ENCODE measurements at regions of chr19 and their contacts with region 1.

Region 1: GRCh38 chr19:44845612-44846454 is at the start of gene NECTIN2:
- DNase-seq: peak; percentile 98
- ATAC-seq: peak; percentile 77
- H3K4me3 ChIP-seq: peak within 1 kb of the TSS; percentile 97
- H3K27ac ChIP-seq: peak within 1 kb of the TSS; percentile 97
- H3K4me1 ChIP-seq: peaks cover 12% of the 10 kb centered on the region
- H3K27me3 ChIP-seq: no peaks in the 10 kb centered on the region
- CTCF ChIP-seq: peak; percentile 79
- POLR2A ChIP-seq: peak; percentile 94
- RAD21 ChIP-seq: peak; percentile 56
- total RNA-seq, gene NECTIN2: 77.8 and 78.0 TPM in 2 replicates

Region 2: DNA sequence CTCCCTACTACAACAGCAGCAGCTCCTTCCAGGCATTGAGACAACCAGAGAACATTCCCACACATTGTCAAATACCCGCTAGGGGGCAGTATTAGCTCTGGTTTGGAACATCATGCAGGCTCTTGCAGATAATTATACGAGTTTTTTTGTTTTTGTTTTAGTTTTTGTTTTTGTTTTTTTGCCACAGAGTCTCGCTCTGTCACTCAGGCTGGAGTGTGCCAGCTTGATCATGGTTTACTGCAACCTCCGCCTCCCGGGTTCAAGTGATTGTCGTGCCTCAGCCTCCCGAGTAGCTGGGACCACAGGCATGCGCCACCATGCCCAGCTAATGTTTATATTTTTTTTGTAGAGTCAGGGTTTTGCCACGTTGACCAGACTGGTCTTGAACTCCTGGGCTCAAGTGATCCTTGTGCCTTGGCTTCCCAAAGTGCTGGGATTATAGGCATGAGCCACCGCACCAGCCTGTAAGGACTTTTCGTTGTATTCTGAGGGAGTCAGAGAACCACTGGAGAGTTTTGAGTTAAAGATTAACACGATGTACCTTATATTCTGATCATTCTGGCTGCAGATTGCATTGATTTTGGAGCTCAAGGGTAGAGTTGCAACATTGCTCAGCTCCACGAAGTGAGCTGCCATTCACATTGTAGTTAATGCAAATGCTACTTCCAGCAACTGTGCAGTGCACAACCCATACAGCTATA is 274.7 kb before region 1 on chr19:
- CTCF ChIA-PET with region 1: no interaction called
- POLR2A ChIA-PET with region 1: no interaction called
- dilution Hi-C with region 1: no loop called
- in situ Hi-C with region 1: loop called (anchors 5 kb)
- intact Hi-C with region 1: loop called (anchors 5 kb)
- DNase-seq: peak; percentile 82
- ATAC-seq: peak; percentile 88
- H3K4me3 ChIP-seq: no peak overlapping the region
- H3K27ac ChIP-seq: no peak overlapping the region
- H3K4me1 ChIP-seq: peaks cover 3% of the 10 kb centered on the region; the same call in 1 of the 2 replicates
- H3K27me3 ChIP-seq: peaks cover 8% of the 10 kb centered on the region
- CTCF ChIP-seq: peak; percentile 85
- POLR2A ChIP-seq: no peak
- RAD21 ChIP-seq: peak; percentile 84

Region 3: DNA sequence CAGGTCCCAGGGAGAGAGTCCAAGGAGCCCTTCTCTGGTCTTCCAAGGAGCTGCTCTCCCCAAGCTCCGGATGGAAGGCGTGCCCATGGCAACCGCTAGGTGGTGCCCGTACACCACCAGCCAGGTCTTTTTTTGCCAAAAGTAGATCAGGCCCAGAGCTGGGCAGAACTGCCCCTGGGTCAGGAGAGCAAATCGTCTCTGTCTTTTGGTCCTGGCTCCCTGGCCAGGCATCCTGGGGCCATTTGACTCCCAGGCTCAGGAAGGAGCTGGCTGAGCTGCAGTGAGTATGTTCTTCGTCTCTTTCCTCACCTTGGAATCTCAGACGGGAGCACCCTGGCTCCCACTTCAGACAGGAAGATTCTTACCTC is 121.9 kb before region 1 on chr19:
- CTCF ChIA-PET with region 1: interaction called, 6 read pairs
- POLR2A ChIA-PET with region 1: no interaction called
- dilution Hi-C with region 1: no loop called
- in situ Hi-C with region 1: loop called (anchors 5 kb)
- intact Hi-C with region 1: loop called (anchors 1 kb)
- DNase-seq: peak; percentile 73
- ATAC-seq: peak; percentile 96
- H3K4me3 ChIP-seq: no peak overlapping the region
- H3K27ac ChIP-seq: 0 out of 2 replicates have a peak overlapping the region, but pooled peaks have one; percentile 10
- H3K4me1 ChIP-seq: peaks cover 15% of the 10 kb centered on the region
- H3K27me3 ChIP-seq: no peaks in the 10 kb centered on the region
- CTCF ChIP-seq: peak; percentile 97
- POLR2A ChIP-seq: no peak
- RAD21 ChIP-seq: peak; percentile 98

Region 4: DNA sequence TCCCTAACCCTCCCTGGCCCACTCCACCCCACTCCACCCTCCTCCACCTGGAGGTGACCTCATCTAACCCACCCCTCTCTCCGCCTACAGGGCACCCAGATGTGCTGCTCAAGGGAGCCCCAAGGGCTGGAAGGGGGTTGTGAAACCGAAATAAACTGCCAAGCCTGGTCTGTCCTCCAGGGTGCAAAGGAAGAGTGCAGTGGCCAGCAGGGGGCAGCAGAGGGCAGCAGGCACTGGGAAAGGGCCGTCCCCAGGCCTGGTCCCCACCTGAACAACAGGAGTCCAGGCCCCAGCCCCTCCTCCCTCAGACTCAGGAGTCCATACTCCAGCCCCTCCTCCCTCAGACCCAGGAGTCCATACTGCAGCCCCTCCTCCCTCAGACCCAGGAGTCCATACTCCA is 45.4 kb before region 1 on chr19:
- CTCF ChIA-PET with region 1: interaction called, 3 read pairs
- POLR2A ChIA-PET with region 1: no interaction called
- dilution Hi-C with region 1: no loop called
- in situ Hi-C with region 1: no loop called
- intact Hi-C with region 1: loop called (anchors 1 kb)
- DNase-seq: peak; percentile 61
- ATAC-seq: peak; percentile 99
- H3K4me3 ChIP-seq: no peak overlapping the region
- H3K27ac ChIP-seq: no peak overlapping the region
- H3K4me1 ChIP-seq: peaks cover 4% of the 10 kb centered on the region
- H3K27me3 ChIP-seq: peaks cover 5% of the 10 kb centered on the region; the same call in 1 of the 2 replicates
- CTCF ChIP-seq: peak; percentile 96
- POLR2A ChIP-seq: no peak
- RAD21 ChIP-seq: peak; percentile 75

Region 5: GRCh38 chr19:44890366-44891015 is 44.7 kb after region 1 on chr19:
- CTCF ChIA-PET with region 1: no interaction called
- POLR2A ChIA-PET with region 1: no interaction called
- dilution Hi-C with region 1: no loop called
- in situ Hi-C with region 1: no loop called
- intact Hi-C with region 1: loop called (anchors 2 kb)
- DNase-seq: peak; percentile 100
- ATAC-seq: peak; percentile 89
- H3K4me3 ChIP-seq: peak overlapping the region; percentile 49
- H3K27ac ChIP-seq: peak overlapping the region; percentile 69
- H3K4me1 ChIP-seq: peaks cover 4% of the 10 kb centered on the region
- H3K27me3 ChIP-seq: no peaks in the 10 kb centered on the region
- CTCF ChIP-seq: 0 out of 2 replicates have a peak, but pooled peaks have one; percentile 1
- POLR2A ChIP-seq: peak; percentile 70
- RAD21 ChIP-seq: 0 out of 2 replicates have a peak, but pooled peaks have one; percentile 14

Region 6: DNA sequence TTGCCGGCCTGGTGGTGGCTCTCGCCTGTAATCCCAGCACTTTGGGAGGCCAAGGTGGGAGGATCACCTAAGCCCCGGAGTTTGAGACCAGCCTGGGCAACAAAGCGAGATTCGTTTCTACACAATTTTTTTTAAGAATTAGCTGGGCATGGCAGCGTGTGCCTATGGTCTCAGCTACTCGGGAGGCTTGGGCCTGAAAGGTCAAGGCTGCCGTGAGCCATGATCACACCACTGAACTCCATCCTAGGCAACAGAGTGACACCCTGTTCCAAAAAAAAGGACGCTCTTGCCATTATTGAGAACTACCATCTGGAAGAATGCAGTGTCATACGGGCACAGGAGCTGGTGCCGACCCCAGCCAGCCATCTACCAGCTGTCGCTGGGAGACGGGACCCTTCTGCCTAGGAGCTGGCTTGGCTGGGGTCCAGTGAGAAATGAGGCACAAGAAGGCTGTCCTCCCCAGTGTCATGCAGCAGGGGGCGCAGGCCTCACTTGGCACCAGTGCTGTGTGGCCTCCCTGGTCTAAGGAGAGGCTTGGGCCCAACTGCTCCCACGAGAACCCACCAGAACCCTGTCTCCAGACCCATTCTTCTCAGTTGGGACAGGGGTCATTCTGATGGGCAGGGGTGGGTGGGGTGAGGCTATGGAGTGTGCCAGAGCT is 143.2 kb after region 1 on chr19:
- CTCF ChIA-PET with region 1: no interaction called
- POLR2A ChIA-PET with region 1: no interaction called
- dilution Hi-C with region 1: no loop called
- in situ Hi-C with region 1: no loop called
- intact Hi-C with region 1: no loop called
- DNase-seq: peak; percentile 62
- ATAC-seq: peak; percentile 89
- H3K4me3 ChIP-seq: no peak overlapping the region
- H3K27ac ChIP-seq: no peak overlapping the region
- H3K4me1 ChIP-seq: no peaks in the 10 kb centered on the region
- H3K27me3 ChIP-seq: no peaks in the 10 kb centered on the region
- CTCF ChIP-seq: peak; percentile 65
- POLR2A ChIP-seq: no peak
- RAD21 ChIP-seq: peak; percentile 56